AG04449 (cell line): ENCODE measurements at regions of chr1 and their contacts with region 1.

Region 1: GRCh38 chr1:113835642-113836307 is 23.5 kb upstream of the RSBN1 start:
- DNase-seq: no peak
- H3K4me3 ChIP-seq: no peak overlapping the region
- CTCF ChIP-seq: no peak

Region 2: DNA sequence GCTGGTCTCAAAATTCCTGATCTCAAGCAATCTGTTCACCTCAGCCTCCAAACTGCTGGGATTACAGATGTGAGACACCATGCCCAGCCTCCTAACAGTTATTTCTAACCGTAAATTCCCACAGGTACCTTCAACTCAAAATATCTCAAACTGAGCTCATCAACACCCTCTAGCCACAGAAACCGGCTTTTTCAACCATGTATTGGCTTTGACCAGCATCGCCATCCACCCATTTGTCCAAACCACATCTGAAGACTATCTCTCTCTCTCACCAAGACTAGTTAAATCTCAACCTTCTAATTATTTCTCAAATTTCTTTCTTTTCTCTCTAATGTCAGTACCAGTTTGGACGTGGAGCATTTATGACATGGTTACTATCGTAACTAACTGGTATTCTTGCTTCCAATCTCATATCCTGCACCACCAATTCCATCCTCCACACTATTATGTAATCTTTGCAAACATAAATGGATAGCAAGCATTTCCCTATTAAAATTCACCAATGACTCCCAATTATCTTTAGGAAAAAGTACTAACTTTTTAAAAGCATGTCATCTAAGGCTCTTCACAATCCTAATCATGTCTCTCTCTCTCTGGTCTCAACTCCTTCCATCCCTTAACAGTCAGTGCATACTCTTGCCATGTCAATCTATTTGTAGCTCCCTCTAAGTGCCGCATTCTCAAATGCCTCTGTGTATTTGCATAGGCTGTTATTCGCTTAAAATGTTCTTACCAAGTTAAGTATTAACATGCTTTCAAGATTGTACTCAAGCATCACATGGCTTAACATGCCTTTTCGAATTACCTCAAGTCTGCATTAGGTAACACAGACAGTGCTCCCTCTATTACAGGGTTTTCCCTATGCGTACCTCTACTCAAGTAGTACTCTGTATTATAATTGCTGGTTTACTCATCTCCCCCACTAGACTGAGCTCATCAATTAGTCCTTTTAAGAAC is 41.6 kb before region 1 on chr1:
- CTCF ChIA-PET with region 1: no interaction called
- POLR2A ChIA-PET with region 1: no interaction called
- DNase-seq: no peak
- H3K4me3 ChIP-seq: no peak overlapping the region
- CTCF ChIP-seq: no peak

Region 3: GRCh38 chr1:113811888-113812660 is 23.7 kb before region 1 on chr1 and contains the start of gene RSBN1:
- CTCF ChIA-PET with region 1: interaction called, 11 read pairs
- POLR2A ChIA-PET with region 1: no interaction called
- DNase-seq: peak; percentile 96
- H3K4me3 ChIP-seq: peak within 1 kb of the TSS; percentile 89
- CTCF ChIP-seq: peak; percentile 17

Region 4: DNA sequence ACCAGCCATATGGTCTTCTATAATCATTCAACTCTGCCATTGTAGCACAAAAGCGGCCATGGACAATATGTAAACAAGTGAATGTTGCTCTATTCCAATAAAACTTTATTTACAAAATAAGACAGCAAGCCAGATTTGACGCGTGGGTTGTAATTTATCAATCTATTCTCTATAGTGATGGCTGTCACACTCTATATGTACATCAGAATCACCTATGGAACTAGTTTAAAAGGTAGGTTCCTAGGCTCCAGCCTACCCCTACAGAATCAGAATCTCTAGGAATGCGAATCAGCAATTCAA is 43.9 kb after region 1 on chr1:
- CTCF ChIA-PET with region 1: interaction called, 12 read pairs
- POLR2A ChIA-PET with region 1: no interaction called
- DNase-seq: no peak
- H3K4me3 ChIP-seq: no peak overlapping the region
- CTCF ChIP-seq: no peak

Region 5: GRCh38 chr1:113904674-113905434 is 69.1 kb after region 1 on chr1 and contains the starts of genes AP4B1 and DCLRE1B:
- CTCF ChIA-PET with region 1: interaction called, 19 read pairs
- POLR2A ChIA-PET with region 1: no interaction called
- DNase-seq: peak; percentile 99
- H3K4me3 ChIP-seq: peak within 1 kb of the TSS; percentile 94
- CTCF ChIP-seq: peak; percentile 94

Region 6: GRCh38 chr1:113928941-113929749 is 93.4 kb after region 1 on chr1 and contains the start of gene HIPK1:
- CTCF ChIA-PET with region 1: interaction called, 47 read pairs
- POLR2A ChIA-PET with region 1: no interaction called
- DNase-seq: peak; percentile 17
- H3K4me3 ChIP-seq: peak within 1 kb of the TSS; percentile 89
- CTCF ChIP-seq: no peak

Region 7: GRCh38 chr1:113963281-113963906 is 127.6 kb after region 1 on chr1:
- CTCF ChIA-PET with region 1: interaction called, 28 read pairs
- POLR2A ChIA-PET with region 1: no interaction called
- DNase-seq: no peak
- H3K4me3 ChIP-seq: no peak overlapping the region
- CTCF ChIP-seq: no peak